HEK293 (cell line): ENCODE measurements at regions of chr17 and their contacts with region 1.

Region 1: DNA sequence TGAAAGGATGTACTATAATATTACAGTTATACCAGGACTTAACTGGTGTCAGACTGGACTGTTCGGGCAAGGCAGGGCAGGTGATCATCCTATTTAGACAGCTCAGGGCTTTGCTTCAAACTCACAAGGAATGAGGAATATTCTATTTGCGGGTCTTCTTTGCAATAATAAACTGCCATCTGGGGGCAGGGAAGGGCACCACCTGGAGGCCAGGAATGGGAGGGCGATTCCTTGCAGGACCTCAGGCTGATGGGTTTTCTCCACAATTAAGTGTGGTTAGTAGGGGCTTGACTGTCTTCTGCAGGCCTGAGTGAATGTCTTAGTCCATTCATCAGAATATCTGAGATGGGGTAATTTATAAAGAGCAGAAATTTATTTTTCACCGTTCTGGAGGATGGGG is 424.1 kb downstream of the CA10 start:
- H3K4me3 ChIP-seq: no peak overlapping the region
- H3K27ac ChIP-seq: no peak overlapping the region
- H3K4me1 ChIP-seq: peaks cover 11% of the 10 kb centered on the region
- CTCF ChIP-seq: 0 out of 2 replicates have a peak, but pooled peaks have one; percentile 38

Region 2: GRCh38 chr17:51721730-51722129 is 12.7 kb before region 1 on chr17:
- CTCF ChIA-PET with region 1: interaction called, 13 read pairs
- POLR2A ChIA-PET with region 1: no interaction called
- H3K4me3 ChIP-seq: no peak overlapping the region
- H3K27ac ChIP-seq: no peak overlapping the region
- H3K4me1 ChIP-seq: no peaks in the 10 kb centered on the region; the same call in 1 of the 2 replicates
- CTCF ChIP-seq: no peak

Region 3: DNA sequence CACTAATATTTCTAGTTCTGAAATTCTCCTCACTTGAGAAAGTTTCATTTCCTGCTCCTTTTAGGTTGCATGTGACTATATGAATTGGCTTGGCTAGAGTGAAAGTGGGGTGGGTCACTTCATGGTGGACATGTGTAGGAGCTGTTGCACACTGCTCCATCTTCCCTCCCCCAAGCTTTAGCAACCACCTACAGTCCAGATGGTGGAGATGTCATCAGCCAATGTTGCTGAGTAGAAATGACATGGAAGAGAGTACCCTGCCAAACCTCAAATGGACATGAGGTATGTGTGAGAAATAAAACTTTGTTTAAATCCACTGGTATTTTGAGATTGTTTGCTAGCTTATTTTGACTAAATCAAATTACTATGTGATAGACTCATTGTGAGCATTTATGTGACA is 142.5 kb after region 1 on chr17:
- CTCF ChIA-PET with region 1: no interaction called
- POLR2A ChIA-PET with region 1: no interaction called
- H3K4me3 ChIP-seq: no peak overlapping the region
- H3K27ac ChIP-seq: no peak overlapping the region
- H3K4me1 ChIP-seq: no peaks in the 10 kb centered on the region
- CTCF ChIP-seq: no peak